OCI-LY7 (cell line): ENCODE measurements at regions of chr2 and their contacts with region 1.

Region 1: GRCh38 chr2:203527719-203528118 is 7.4 kb downstream of the RAPH1 start:
- DNase-seq: no peak
- H3K4me3 ChIP-seq: no peak overlapping the region
- H3K27ac ChIP-seq: no peak overlapping the region
- H3K4me1 ChIP-seq: peaks cover 26% of the 10 kb centered on the region
- CTCF ChIP-seq: no peak

Region 2: GRCh38 chr2:203489531-203489930 is 38.2 kb before region 1 on chr2:
- CTCF ChIA-PET with region 1: no interaction called
- POLR2A ChIA-PET with region 1: no interaction called
- intact Hi-C with region 1: loop called (anchors 1 kb)
- DNase-seq: no peak
- H3K4me3 ChIP-seq: no peak overlapping the region
- H3K27ac ChIP-seq: no peak overlapping the region
- H3K4me1 ChIP-seq: peaks cover 21% of the 10 kb centered on the region
- CTCF ChIP-seq: no peak